ENCODE measurements at regions of chr12 and their contacts with region 1.

Region 1: GRCh38 chr12:84842406-84843013 is 70.1 kb downstream of the SLC6A15 start:
- DNase-seq: peak in 1 of 2 experiments; percentile 1
- H3K4me3 ChIP-seq: no peak overlapping the region
- H3K27ac ChIP-seq: no peak overlapping the region
- H3K4me1 ChIP-seq: no peaks in the 10 kb centered on the region
- H3K27me3 ChIP-seq: no peaks in the 10 kb centered on the region
- CTCF ChIP-seq: peak; percentile 81

Region 2: DNA sequence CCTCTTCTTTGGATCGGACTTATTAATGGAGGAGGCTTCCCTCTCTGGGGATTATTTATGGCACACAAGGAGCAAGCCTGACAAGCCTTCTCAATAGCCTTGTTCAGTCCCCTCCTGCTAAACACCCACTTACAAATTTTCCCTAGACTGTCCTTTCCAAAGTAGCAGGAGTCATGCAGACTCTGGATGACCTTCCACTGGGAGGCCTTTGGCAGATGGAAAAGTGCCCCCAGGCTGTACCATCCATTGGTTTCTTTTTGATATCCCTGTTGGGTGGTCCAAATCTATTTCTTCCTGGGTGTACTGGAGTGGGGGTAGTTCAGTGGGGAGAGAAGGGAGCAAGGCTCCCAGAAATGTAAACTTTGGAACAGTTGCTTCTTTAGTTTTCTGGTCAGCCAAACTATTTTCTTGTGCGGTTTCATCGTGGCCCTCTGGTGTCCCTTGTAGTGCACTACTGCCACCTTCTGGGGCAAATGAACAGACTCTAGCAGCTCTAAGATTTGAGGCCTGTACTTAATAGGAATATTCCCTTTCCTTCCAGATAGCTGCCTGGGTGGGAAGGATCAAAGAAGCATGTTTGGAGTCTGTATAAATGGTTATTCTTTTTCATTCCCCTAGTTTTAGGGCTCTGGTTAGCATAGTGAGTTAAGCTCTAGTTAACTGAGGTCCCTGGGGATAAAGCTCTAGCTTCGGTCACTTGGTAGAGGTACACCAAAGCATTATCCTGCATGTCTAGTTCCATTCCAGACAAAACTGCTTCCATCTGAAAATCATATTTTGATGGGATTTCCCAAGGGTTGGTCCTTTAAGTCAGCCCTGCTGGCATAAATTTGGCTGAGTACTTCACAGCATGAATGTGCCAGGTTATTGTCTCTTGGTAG is 339.4 kb before region 1 on chr12:
- CTCF ChIA-PET with region 1: no interaction called
- POLR2A ChIA-PET with region 1: no interaction called
- intact Hi-C with region 1: loop called (anchors 10 kb)
- DNase-seq: peak in 1 of 2 experiments; percentile 41
- H3K4me3 ChIP-seq: no peak overlapping the region
- H3K27ac ChIP-seq: no peak overlapping the region
- H3K4me1 ChIP-seq: peaks cover 7% of the 10 kb centered on the region
- H3K27me3 ChIP-seq: no peaks in the 10 kb centered on the region
- CTCF ChIP-seq: peak; percentile 62

Region 3: DNA sequence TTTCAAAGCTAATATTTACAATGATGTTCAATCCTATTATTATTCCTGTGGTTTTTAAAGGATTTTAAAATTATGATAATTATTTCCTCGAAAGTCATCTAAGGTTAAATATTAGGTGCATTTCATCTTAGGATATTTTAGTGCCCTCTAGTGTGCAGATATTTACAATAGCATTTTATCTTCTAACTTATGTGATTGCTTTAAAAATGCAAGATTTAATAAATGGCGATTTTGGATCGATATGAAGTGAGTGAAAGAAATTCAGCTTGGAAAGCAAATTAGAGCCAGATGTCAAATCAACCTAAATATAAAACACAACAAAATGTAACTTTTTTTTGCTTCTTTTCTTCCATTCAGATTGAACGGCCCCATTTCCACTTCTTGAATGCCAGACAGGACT is 223.4 kb before region 1 on chr12:
- CTCF ChIA-PET with region 1: no interaction called
- POLR2A ChIA-PET with region 1: interaction called, 5 read pairs
- intact Hi-C with region 1: loop called (anchors 10 kb)
- DNase-seq: no peak
- H3K4me3 ChIP-seq: no peak overlapping the region
- H3K27ac ChIP-seq: no peak overlapping the region
- H3K4me1 ChIP-seq: no peaks in the 10 kb centered on the region
- H3K27me3 ChIP-seq: no peaks in the 10 kb centered on the region
- CTCF ChIP-seq: peak; percentile 60